Activated naive CD4-positive, alpha-beta T cell treated with anti-CD3 and anti-CD28 coated beads for 36 hours (primary cell): ENCODE measurements at regions of chr3 and their contacts with region 1.

Region 1: GRCh38 chr3:23888617-23889228 is 28.1 kb downstream of the NKIRAS1 start:
- DNase-seq: no peak
- H3K4me3 Mint-ChIP-seq: no peak overlapping the region
- H3K27ac Mint-ChIP-seq: no peak overlapping the region
- H3K4me1 Mint-ChIP-seq: no peaks in the 10 kb centered on the region
- H3K27me3 Mint-ChIP-seq: no peaks in the 10 kb centered on the region

Region 2: GRCh38 chr3:22565393-22565792 is 1323.3 kb before region 1 on chr3:
- CTCF ChIA-PET with region 1: no interaction called
- intact Hi-C with region 1: loop called (anchors 10 kb)
- DNase-seq: no peak
- H3K4me3 Mint-ChIP-seq: no peak overlapping the region
- H3K27ac Mint-ChIP-seq: no peak overlapping the region
- H3K4me1 Mint-ChIP-seq: no peaks in the 10 kb centered on the region
- H3K27me3 Mint-ChIP-seq: no peaks in the 10 kb centered on the region

Region 3: DNA sequence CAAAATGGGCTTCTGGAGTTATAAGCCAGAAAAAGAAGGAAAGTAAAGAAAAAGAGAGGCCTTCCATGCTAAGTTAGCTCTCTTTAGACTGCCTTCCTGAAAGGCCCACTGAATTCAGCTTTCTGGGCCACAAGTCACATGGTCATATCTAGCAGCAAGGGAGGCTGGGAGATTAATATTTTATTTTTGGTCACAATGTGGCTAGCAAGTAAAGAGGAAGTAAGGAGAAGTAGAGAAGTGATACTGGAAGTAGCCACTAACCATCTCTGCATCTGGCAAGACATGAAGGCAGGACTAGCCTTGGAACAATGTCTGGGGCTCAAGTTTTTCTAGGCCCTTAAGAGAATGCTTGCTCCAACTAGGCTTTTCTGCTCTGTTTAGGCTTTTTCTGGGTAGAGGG is 164.8 kb before region 1 on chr3:
- CTCF ChIA-PET with region 1: no interaction called
- intact Hi-C with region 1: no loop called
- DNase-seq: no peak
- H3K4me3 Mint-ChIP-seq: no peak overlapping the region
- H3K27ac Mint-ChIP-seq: no peak overlapping the region
- H3K4me1 Mint-ChIP-seq: peaks cover 9% of the 10 kb centered on the region
- H3K27me3 Mint-ChIP-seq: no peaks in the 10 kb centered on the region

Region 4: DNA sequence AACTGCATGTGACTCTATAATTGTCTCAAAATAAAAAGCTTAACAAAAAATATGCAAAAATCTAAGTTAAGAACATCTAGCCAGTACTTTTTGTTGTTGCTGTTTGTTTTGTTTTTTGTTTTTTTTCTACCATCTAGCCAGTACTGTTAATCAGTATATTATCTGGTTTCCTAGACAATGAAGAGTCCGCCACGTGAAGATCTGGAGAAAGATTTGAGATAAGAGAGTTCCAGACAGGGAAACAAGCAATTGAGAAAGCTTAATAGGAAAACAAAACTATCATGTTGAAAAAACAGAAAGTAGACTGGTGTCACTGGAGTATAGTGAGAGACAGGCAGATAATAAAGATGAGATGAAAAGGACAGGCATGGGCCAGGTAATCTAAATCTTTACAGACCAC is 10.6 kb after region 1 on chr3:
- CTCF ChIA-PET with region 1: interaction called, 19 read pairs
- intact Hi-C with region 1: no loop called
- DNase-seq: no peak
- H3K4me3 Mint-ChIP-seq: no peak overlapping the region
- H3K27ac Mint-ChIP-seq: no peak overlapping the region
- H3K4me1 Mint-ChIP-seq: no peaks in the 10 kb centered on the region
- H3K27me3 Mint-ChIP-seq: no peaks in the 10 kb centered on the region

Region 5: GRCh38 chr3:23916886-23917678 is 28.4 kb after region 1 on chr3 and contains the starts of genes NKIRAS1 and RPL15:
- CTCF ChIA-PET with region 1: interaction called, 3 read pairs
- intact Hi-C with region 1: loop called (anchors 2 kb)
- DNase-seq: peak; percentile 97
- H3K4me3 Mint-ChIP-seq: peak within 1 kb of the TSS; percentile 94
- H3K27ac Mint-ChIP-seq: peak within 1 kb of the TSS; percentile 99
- H3K4me1 Mint-ChIP-seq: peaks cover 47% of the 10 kb centered on the region
- H3K27me3 Mint-ChIP-seq: no peaks in the 10 kb centered on the region
- total RNA-seq, gene NKIRAS1: 2.4 to 3.1 TPM
- total RNA-seq, gene RPL15: 2,861 to 2,959 TPM

Region 6: DNA sequence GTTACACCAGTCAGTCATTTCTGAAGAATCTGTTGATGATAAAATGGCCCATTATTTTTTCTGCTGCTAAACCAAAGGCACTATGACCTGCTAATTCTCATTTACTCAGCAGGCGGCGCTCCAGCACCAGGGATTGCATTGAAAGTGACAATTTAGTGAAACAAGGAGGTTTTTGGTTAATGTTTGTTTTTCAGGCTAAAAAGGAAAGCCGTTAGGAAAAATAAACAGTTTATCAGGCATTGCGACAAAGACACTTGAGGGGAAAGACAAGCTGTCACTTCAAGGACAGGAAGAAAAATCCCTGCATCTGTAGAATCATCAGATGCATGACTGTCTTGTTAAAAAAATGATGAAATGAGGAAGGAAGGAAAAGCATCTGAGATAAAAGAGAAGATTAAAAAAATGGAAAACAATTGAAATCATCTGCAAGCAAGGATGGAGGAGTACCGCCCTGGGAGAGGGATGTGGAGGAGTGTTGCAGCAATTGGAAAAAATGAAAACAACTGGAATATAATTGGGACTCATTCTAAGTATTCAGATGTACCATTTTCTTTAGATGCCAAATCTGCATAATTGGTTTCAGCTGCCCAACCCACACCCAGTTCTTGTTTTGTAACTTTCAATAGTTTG is 110.4 kb after region 1 on chr3:
- CTCF ChIA-PET with region 1: interaction called, 14 read pairs
- intact Hi-C with region 1: loop called (anchors 2 kb)
- DNase-seq: peak; percentile 88
- H3K4me3 Mint-ChIP-seq: no peak overlapping the region
- H3K27ac Mint-ChIP-seq: no peak overlapping the region
- H3K4me1 Mint-ChIP-seq: peaks cover 8% of the 10 kb centered on the region
- H3K27me3 Mint-ChIP-seq: peaks cover 8% of the 10 kb centered on the region

Region 7: DNA sequence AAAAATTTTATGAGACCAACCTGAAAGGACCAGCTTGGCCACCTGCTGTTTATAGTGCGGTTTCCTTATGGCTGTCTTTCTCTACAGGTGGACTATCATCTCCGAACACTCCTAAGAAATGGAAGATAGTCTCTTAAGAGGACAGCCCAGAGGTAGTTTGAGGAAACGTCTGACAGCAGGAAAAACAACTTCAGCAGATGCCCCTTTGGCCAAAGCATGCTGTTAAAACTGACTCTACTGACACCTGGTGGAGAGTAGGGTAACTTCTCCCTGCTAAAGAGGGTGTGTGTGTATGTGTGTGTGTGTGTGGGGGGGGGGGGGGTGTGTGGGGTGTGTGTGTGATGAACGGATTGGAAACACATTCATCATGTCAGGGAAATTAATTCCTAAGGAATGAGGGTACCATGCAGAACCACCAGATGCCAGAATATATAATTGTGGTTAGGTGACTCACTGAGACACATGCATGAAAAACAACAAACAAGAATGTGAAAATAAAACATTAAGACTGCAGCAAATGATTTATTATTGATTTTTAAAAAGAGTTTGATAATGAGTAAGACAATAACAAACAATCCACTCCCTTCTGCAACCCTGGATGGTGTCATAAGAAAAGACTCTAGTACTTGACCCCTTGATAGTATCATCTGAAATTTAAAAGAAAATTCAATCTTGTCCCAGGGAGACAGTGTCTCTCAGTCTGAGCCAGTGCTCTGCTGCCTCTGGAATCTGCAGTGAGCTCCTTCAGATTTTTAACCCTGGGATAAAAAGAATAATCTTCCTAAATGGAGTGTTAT is 349.4 kb after region 1 on chr3:
- CTCF ChIA-PET with region 1: no interaction called
- intact Hi-C with region 1: loop called (anchors 1 kb)
- DNase-seq: peak; percentile 40
- H3K4me3 Mint-ChIP-seq: no peak overlapping the region
- H3K27ac Mint-ChIP-seq: no peak overlapping the region
- H3K4me1 Mint-ChIP-seq: no peaks in the 10 kb centered on the region
- H3K27me3 Mint-ChIP-seq: peaks cover 9% of the 10 kb centered on the region

Region 8: DNA sequence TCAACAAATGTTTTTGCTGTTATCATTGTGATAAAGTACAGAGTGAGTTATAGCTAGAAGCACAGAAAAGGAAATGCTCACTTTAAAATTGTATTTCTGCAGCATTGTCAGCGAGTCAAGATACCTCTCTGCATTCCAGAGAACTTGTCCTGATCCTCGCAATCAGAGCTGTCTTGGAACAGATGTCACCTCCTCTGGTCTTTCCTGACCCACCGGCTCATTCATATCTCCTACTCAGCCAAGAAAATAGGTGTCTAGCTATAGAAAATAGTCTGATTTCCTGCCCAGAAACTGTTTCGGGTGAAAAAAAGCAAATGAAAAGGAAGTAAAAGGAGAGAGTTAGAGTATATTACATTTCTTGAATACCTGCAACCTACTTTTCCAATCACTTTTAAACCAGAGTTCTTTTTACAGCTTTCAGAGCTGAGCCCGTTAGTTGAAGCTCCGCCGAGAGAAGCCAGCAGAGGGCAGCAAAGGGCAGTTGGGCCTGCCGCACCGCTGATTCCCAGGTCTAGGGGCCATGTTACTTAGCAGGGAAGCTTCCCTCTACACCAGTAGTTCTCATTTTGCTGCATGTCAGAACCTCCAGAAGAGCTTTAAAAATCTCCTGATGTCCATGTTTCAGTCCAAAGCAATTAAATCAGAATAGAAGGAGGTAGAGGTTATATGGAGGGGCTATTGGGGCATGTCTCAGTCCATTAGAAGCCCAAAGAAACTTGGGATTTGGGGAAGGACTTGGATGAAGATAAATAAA is 791.7 kb after region 1 on chr3:
- CTCF ChIA-PET with region 1: no interaction called
- intact Hi-C with region 1: loop called (anchors 5 kb)
- DNase-seq: peak; percentile 73
- H3K4me3 Mint-ChIP-seq: no peak overlapping the region
- H3K27ac Mint-ChIP-seq: no peak overlapping the region
- H3K4me1 Mint-ChIP-seq: peaks cover 6% of the 10 kb centered on the region
- H3K27me3 Mint-ChIP-seq: peaks cover 34% of the 10 kb centered on the region